B cell (primary cell): ENCODE measurements at regions of chr2 and their contacts with region 1.

Region 1: DNA sequence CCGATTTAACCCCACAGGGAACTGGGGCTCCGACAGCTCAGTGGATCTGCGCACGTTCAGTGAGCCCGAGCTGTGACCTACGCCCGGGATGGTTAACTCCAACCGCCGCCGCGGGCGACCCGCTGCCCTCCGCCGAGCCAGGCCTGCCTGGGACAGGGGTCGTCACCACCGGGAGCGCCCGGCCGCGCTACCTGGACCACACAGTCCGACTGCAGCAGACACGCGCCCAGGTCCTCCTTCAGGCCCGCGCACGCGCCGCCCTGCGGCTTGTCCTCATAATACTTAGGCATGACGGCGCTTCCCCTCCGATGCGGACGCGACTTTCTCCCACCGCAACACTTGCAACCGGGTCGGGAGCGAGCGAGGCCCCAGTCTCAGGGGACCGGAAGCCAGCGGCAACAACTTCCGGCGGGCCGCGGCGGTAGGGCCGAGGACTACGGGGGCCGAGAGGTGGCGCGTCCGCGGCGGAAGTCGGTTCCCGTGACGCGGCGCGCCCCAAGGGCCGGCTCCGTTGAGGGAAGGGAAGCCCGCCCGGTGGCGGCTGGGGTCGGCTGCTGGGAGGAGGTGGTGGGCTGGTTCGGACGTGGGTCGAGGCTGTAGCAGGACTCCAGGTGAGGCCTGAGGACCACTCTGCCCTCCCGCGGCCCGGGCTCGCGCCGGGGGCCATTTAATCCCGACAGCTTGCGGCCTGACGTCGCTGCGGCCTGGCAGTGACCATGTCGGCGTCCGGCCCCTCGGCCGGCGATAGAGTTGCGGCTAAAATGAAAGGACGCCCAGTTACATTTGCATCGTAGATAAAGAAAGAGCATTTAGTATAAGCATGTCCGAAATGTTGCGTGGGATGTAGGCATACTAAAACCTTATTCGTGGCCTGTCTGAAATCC is at the starts of genes COA5 and UNC50:
- DNase-seq: peak; percentile 94
- ATAC-seq: peak; percentile 92
- H3K4me3 ChIP-seq: peak within 1 kb of the TSS; percentile 88 to 99 (median 97)
- H3K4me3 Mint-ChIP-seq: peak within 1 kb of the TSS; percentile 93
- H3K27ac ChIP-seq: peak within 1 kb of the TSS; percentile 86 to 97
- H3K27ac Mint-ChIP-seq: peak within 1 kb of the TSS; percentile 94
- H3K4me1 ChIP-seq: peaks cover 33 to 35% of the 10 kb centered on the region in 2 donors
- H3K4me1 Mint-ChIP-seq: peaks cover 67% of the 10 kb centered on the region
- H3K27me3 ChIP-seq: no peaks in the 10 kb centered on the region
- H3K27me3 Mint-ChIP-seq: no peaks in the 10 kb centered on the region
- CTCF ChIP-seq: no peak
- total RNA-seq, gene COA5: 46.9 and 48.9 TPM in 2 replicates
- total RNA-seq, gene UNC50: 38.8 and 45.5 TPM in 2 replicates

Region 2: GRCh38 chr2:98560256-98560771 is 48.0 kb before region 1 on chr2:
- CTCF ChIA-PET with region 1: no interaction called
- POLR2A ChIA-PET with region 1: no interaction called
- intact Hi-C with region 1: loop called (anchors 2 kb)
- DNase-seq: no peak
- ATAC-seq: no peak
- H3K4me3 ChIP-seq: no peak overlapping the region
- H3K4me3 Mint-ChIP-seq: no peak overlapping the region
- H3K27ac ChIP-seq: no peak overlapping the region
- H3K27ac Mint-ChIP-seq: peak overlapping the region; percentile 15
- H3K4me1 ChIP-seq: peaks cover 8 to 29% of the 10 kb centered on the region in 2 donors
- H3K4me1 Mint-ChIP-seq: peaks cover 29% of the 10 kb centered on the region
- H3K27me3 ChIP-seq: no peaks in the 10 kb centered on the region
- H3K27me3 Mint-ChIP-seq: no peaks in the 10 kb centered on the region
- CTCF ChIP-seq: no peak